Panc1 (cell line): ENCODE measurements at regions of chr6 and their contacts with region 1.

Region 1: DNA sequence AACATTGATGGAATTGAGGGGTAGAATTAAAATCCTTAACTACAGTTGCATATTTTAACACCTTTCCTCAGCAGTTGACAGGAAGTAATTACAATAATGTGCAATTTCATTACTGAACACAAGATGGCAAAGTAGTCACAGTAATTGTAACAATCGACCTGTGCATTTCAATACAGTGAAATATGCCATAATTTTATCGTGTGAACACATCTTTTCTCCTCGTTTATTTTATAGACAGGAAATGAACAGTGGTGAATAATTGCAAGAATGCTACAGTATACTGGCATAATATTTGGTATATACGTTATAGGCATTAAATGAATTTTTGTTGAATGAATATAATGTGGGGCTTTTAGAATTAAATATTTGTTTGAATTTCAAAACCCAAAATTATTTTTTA is 25.0 kb downstream of the CYB5R4 start:
- DNase-seq: no peak
- ATAC-seq: 0 out of 2 replicates have a peak, but pooled peaks have one; percentile 72
- H3K4me3 ChIP-seq: no peak overlapping the region
- H3K27ac ChIP-seq: no peak overlapping the region
- H3K4me1 ChIP-seq: no peaks in the 10 kb centered on the region; the same call in 1 of the 2 replicates
- H3K27me3 ChIP-seq: no peaks in the 10 kb centered on the region
- CTCF ChIP-seq: peak; percentile 65; the same call in 1 of the 2 replicates

Region 2: DNA sequence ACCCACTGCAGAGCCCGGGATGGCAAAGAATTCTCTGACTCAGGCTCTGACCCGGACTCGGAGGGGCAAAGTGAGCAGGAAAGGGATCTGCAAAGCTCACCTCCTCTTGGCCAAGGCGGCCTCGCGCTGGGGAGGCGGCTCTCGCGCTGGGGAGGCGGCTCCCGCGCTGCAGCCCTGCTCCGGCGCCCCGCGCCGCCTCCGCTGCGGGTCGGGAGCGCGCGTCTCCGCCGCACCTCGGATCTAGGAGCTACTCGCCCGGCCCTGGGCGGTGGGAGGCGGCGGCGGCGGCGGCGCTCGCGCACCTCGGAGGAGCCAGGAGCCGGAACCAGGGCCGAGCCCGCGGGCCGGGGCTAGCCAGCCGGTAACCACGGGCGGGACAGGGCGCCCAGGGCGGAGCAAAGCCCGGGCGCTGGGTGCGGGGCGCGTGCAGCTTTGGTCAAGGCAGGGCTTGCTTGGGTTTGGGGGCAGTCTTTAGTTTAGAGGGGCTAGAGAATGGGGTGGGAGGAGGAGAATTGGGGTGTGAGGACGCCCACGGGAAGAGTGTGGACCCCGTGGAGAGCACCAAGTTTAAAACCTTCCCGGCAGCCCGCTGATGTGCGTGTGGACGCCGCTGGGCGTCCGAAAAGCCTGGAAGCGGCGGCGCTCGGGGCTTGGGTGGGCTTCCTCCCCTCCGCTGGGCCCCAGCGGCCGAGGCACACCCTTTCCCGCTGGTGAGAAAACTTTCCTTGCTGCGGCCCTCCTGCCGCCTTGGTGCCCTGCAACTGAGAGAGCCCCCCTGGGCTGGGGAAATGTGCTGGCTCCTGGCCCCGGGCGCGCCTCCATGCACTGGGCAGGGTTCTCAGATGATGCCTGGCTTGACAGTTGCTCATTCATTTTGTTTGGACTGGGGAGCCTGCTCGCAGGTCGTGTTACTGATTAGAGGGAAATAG is 149.3 kb after region 1 on chr6 and contains the start of gene MRAP2:
- CTCF ChIA-PET with region 1: no interaction called
- POLR2A ChIA-PET with region 1: no interaction called
- in situ Hi-C with region 1: no loop called
- intact Hi-C with region 1: loop called (anchors 10 kb)
- DNase-seq: no peak
- ATAC-seq: peak; percentile 90
- H3K4me3 ChIP-seq: peak within 1 kb of the TSS; percentile 53 to 67
- H3K27ac ChIP-seq: no peak within 1 kb of the TSS
- H3K4me1 ChIP-seq: no peaks in the 10 kb centered on the region
- H3K27me3 ChIP-seq: peaks cover 6% of the 10 kb centered on the region
- CTCF ChIP-seq: no peak
- total RNA-seq, gene MRAP2: 2.5 TPM

Region 3: DNA sequence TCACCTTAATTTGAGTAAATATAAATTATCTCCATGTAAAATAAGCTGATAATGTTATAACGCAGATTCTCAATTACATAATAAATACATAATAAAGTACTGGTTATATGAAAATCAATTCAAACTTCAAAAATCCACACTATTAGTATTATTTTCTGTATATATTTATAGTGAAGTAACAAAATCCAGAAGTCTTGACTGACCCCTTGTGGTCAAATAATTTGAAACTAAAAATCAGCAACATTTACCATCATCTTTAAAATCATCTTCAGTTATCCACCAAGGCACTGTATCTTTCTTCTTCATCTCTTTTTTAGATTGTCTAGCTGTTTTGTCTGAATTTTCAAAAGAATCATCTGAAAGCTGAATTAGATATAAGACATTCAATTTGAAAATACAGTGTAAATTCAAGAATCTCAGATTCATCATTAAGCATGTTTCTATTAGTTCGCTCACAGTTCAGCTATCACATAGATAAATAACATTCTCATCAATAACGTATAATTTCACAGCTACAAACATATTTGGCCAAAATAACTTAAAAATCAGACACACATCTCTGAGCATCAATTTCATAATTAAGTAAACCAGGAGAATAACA is 336.4 kb after region 1 on chr6:
- CTCF ChIA-PET with region 1: no interaction called
- POLR2A ChIA-PET with region 1: no interaction called
- in situ Hi-C with region 1: no loop called
- intact Hi-C with region 1: loop called (anchors 2 kb)
- DNase-seq: no peak
- ATAC-seq: no peak
- H3K4me3 ChIP-seq: no peak overlapping the region
- H3K27ac ChIP-seq: no peak overlapping the region
- H3K4me1 ChIP-seq: peaks cover 2% of the 10 kb centered on the region
- H3K27me3 ChIP-seq: no peaks in the 10 kb centered on the region
- CTCF ChIP-seq: peak; percentile 53; the same call in 1 of the 2 replicates